Heart right ventricle (tissue), 16 donors: ENCODE measurements at regions of chr18 and their contacts with region 1.

Region 1: GRCh38 chr18:21820035-21820810 is 79.6 kb downstream of the MIB1 start:
- DNase-seq: no peak
- ATAC-seq: peak in 1 of 8 donors; percentile 40
- H3K4me3 ChIP-seq: no peak overlapping the region
- H3K27ac ChIP-seq: no peak overlapping the region
- H3K4me1 ChIP-seq: no peaks in the 10 kb centered on the region
- H3K27me3 ChIP-seq: no peaks in the 10 kb centered on the region
- CTCF ChIP-seq: peak; percentile 32 to 72 (median 58)

Region 2: DNA sequence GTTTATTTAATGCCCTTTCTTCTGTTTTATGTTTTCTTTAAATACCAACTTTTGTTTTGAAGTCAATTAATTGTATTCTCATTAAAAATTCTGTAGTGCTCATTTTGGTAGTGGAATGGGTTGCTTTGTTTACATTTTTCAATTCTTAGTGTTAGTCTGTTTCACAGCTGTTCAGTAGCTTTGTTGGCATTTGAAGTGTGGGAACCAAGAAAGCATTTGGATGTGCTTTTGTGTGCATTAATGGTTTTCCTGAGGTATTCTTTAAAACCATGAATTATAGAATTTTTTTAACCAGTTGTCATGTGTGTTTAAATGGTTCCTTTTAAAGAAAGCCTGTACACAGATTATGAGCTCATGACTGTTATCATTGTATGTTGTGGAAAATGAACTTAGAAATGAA is 59.9 kb before region 1 on chr18:
- intact Hi-C with region 1: loop called in 1 of 10 experiments (anchors 10 kb)
- DNase-seq: no peak
- ATAC-seq: no peak
- H3K4me3 ChIP-seq: no peak overlapping the region
- H3K27ac ChIP-seq: no peak overlapping the region
- H3K4me1 ChIP-seq: peaks cover 0 to 45% (median 28%) of the 10 kb centered on the region in 9 donors
- H3K27me3 ChIP-seq: no peaks in the 10 kb centered on the region
- CTCF ChIP-seq: no peak